T-cell (primary cell): ENCODE measurements at regions of chr21 and their contacts with region 1.

Region 1: GRCh38 chr21:45372732-45373355 is 32.1 kb upstream of the COL18A1 start:
- DNase-seq: no peak
- ATAC-seq: no peak
- H3K4me3 ChIP-seq: no peak overlapping the region
- H3K4me3 Mint-ChIP-seq: no peak overlapping the region
- H3K27ac ChIP-seq: no peak overlapping the region
- H3K27ac Mint-ChIP-seq: no peak overlapping the region
- H3K4me1 ChIP-seq: peaks cover 0 to 8% of the 10 kb centered on the region in 2 experiments
- H3K4me1 Mint-ChIP-seq: peaks cover 11 to 23% (median 19%) of the 10 kb centered on the region in 3 donors
- H3K27me3 ChIP-seq: peaks cover 0 to 42% of the 10 kb centered on the region in 2 experiments
- H3K27me3 Mint-ChIP-seq: peaks cover 6 to 18% of the 10 kb centered on the region in 2 donors

Region 2: DNA sequence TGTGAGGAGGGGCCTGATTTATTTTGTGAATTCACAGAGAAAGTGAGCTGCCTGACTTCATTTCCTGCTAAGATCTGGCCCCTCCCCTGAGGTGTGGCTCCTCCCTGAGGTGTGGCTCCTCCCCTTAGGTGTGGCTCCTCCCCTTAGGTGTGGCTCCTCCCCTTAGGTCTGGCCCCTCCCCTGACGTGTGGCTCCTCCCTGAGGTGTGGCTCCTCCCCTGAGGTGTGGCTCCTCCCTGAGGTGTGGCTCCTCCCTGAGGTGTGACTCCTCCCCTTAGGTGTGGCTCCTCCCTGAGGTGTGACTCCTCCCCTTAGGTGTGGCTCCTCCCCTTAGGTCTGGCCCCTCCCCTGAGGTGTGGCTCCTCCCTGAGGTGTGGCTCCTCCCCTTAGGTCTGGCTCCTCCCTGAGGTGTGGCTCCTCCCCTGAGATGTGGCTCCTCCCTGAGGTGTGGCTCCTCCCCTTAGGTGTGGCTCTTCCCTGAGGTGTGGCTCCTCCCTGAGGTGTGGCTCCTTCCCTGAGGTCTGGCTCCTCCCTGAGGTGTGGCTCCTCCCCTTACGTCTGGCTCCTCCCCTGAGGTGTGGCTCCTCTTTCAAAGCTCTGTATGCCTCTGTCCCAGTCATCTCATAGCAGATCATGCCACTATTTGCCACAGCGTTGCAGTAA is 944.4 kb before region 1 on chr21:
- CTCF ChIA-PET with region 1: no interaction called
- POLR2A ChIA-PET with region 1: interaction called in 1 of 2 experiments, 14 read pairs
- DNase-seq: peak in 33 of 35 experiments; percentile 18 to 72 (median 62)
- ATAC-seq: peak in 2 of 4 experiments; percentile 53 to 83
- H3K4me3 ChIP-seq: no peak overlapping the region
- H3K4me3 Mint-ChIP-seq: no peak overlapping the region
- H3K27ac ChIP-seq: no peak overlapping the region
- H3K27ac Mint-ChIP-seq: no peak overlapping the region
- H3K4me1 ChIP-seq: no peaks in the 10 kb centered on the region
- H3K4me1 Mint-ChIP-seq: no peaks in the 10 kb centered on the region
- H3K27me3 ChIP-seq: peaks cover 0 to 2% of the 10 kb centered on the region in 2 experiments
- H3K27me3 Mint-ChIP-seq: no peaks in the 10 kb centered on the region